Calu3 (cell line): ENCODE measurements at regions of chr4 and their contacts with region 1.

Region 1: GRCh38 chr4:144583658-144584057 is 62.3 kb upstream of the HHIP start:
- DNase-seq: peak; percentile 17
- H3K4me3 Mint-ChIP-seq: no peak overlapping the region
- H3K27ac Mint-ChIP-seq: peak overlapping the region; percentile 41
- H3K4me1 Mint-ChIP-seq: peaks cover 59% of the 10 kb centered on the region
- H3K27me3 Mint-ChIP-seq: no peaks in the 10 kb centered on the region
- CTCF ChIP-seq: no peak

Region 2: GRCh38 chr4:144283526-144283925 is 300.1 kb before region 1 on chr4:
- CTCF ChIA-PET with region 1: no interaction called
- intact Hi-C with region 1: no loop called
- DNase-seq: no peak
- H3K4me3 Mint-ChIP-seq: no peak overlapping the region
- H3K27ac Mint-ChIP-seq: no peak overlapping the region
- H3K4me1 Mint-ChIP-seq: no peaks in the 10 kb centered on the region
- H3K27me3 Mint-ChIP-seq: no peaks in the 10 kb centered on the region
- CTCF ChIP-seq: no peak

Region 3: GRCh38 chr4:144611846-144612245 is 28.2 kb after region 1 on chr4:
- CTCF ChIA-PET with region 1: no interaction called
- intact Hi-C with region 1: no loop called
- DNase-seq: peak; percentile 13
- H3K4me3 Mint-ChIP-seq: no peak overlapping the region
- H3K27ac Mint-ChIP-seq: no peak overlapping the region
- H3K4me1 Mint-ChIP-seq: no peaks in the 10 kb centered on the region
- H3K27me3 Mint-ChIP-seq: no peaks in the 10 kb centered on the region
- CTCF ChIP-seq: no peak

Region 4: GRCh38 chr4:144627663-144628076 is 44.0 kb after region 1 on chr4:
- CTCF ChIA-PET with region 1: no interaction called
- intact Hi-C with region 1: loop called (anchors 5 kb)
- DNase-seq: no peak
- H3K4me3 Mint-ChIP-seq: no peak overlapping the region
- H3K27ac Mint-ChIP-seq: no peak overlapping the region
- H3K4me1 Mint-ChIP-seq: no peaks in the 10 kb centered on the region
- H3K27me3 Mint-ChIP-seq: no peaks in the 10 kb centered on the region
- CTCF ChIP-seq: no peak

Region 5: DNA sequence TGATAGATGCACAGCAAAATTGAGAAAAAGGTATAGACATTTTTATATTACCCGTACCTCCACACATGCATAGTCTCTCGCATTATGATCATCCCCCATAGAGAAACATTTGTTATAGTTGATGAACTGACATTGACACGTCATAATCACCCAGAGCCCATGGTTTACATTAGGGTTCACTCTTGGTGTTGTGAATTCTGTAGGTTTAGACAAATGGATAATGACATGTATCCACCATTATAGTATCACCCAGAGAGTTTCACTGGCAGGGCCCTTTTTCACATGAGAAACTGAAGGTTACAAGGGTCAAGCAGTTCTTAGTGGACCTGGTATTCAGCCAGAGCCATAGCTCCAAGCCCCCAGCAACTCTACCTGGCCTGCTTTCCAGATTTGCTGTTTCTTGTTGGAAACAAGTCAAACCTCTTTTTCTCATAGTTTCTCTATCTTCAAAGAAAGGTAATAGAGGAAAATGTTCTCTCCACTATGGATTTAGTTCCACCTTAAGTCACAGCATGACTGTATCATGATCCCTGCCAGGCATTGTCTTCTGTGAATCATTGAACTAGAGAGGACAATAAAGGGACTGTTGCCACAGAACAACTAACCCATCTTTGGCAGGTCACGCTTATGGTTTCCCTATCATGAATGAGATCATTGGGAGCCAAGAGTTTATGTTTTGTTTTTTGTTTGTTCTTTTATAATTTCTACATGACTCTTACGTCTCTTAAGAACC is 126.3 kb after region 1 on chr4:
- CTCF ChIA-PET with region 1: no interaction called
- intact Hi-C with region 1: loop called (anchors 5 kb)
- DNase-seq: peak; percentile 48
- H3K4me3 Mint-ChIP-seq: no peak overlapping the region
- H3K27ac Mint-ChIP-seq: peak overlapping the region; percentile 54
- H3K4me1 Mint-ChIP-seq: peaks cover 36% of the 10 kb centered on the region
- H3K27me3 Mint-ChIP-seq: no peaks in the 10 kb centered on the region
- CTCF ChIP-seq: no peak